CD14-positive monocyte (primary cell): ENCODE measurements at regions of chr11 and their contacts with region 1.

Region 1: GRCh38 chr11:60513496-60514460 is 1.4 kb upstream of the MS4A13 start:
- DNase-seq: peak in 2 of 3 donors; percentile 5 to 14
- H3K4me3 ChIP-seq: no peak overlapping the region
- H3K4me3 Mint-ChIP-seq: no peak overlapping the region
- H3K27ac ChIP-seq: no peak overlapping the region
- H3K27ac Mint-ChIP-seq: no peak overlapping the region
- H3K4me1 ChIP-seq: no peaks in the 10 kb centered on the region
- H3K4me1 Mint-ChIP-seq: peaks cover 5% of the 10 kb centered on the region
- H3K27me3 ChIP-seq: peaks cover 0 to 2% of the 10 kb centered on the region in 2 donors
- H3K27me3 Mint-ChIP-seq: peaks cover 0 to 8% (median 0%) of the 10 kb centered on the region in 3 donors
- CTCF ChIP-seq: no peak

Region 2: DNA sequence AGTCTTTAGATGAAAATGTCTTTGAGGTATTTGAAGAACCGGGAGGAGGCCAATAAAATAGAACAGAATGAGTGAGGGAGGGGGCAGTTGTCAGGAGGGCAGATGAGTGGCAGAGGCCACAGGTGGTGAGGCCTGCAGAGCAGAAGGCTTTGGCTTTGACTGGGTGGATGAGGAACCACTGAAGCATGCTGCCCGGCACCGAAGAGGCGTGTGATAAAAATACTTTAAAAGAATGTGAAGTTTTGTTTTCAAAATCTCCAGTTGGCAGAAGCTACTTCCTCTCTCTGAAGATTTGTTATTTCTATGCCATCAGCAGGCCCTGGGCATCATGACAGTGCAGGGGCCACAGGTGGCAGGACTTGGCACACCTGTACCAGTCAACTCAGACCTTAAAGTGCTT is 14.9 kb before region 1 on chr11:
- intact Hi-C with region 1: loop called in 1 of 2 experiments (anchors 2 kb)
- DNase-seq: peak in 2 of 3 donors; percentile 10 to 24
- H3K4me3 ChIP-seq: peak overlapping the region in 1 of 3 experiments; percentile 50
- H3K4me3 Mint-ChIP-seq: peak overlapping the region in 1 of 2 donors; percentile 6
- H3K27ac ChIP-seq: peak overlapping the region; percentile 8 to 21
- H3K27ac Mint-ChIP-seq: peak overlapping the region in 6 of 7 donors; percentile 26 to 82 (median 74)
- H3K4me1 ChIP-seq: peaks cover 11 to 15% of the 10 kb centered on the region in 2 donors
- H3K4me1 Mint-ChIP-seq: peaks cover 18% of the 10 kb centered on the region
- H3K27me3 ChIP-seq: peaks cover 0 to 2% of the 10 kb centered on the region in 2 donors
- H3K27me3 Mint-ChIP-seq: peaks cover 0 to 5% (median 2%) of the 10 kb centered on the region in 3 donors
- CTCF ChIP-seq: no peak